ENCODE measurements at regions of chr2 and their contacts with region 1.

Region 1: DNA sequence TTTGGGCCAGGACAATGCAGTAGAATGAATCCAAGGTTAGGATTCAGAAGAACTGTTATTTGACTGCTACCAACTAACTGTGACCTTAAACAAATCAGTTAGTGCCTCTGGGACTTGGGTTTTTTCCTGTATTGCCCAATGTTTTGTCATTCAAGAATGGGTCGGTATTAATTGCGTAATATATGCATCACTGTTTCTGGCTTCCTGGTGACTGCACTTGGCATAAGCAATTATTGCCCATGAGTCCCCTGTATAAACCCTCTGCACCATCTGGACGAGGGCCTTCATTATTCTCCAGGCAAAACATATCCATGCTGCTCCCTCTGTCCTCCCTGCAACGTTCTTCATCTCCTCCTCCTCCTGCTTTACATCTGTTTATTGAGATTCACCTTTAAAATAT is 255.8 kb upstream of the LRRTM1 start:
- DNase-seq: no peak
- ATAC-seq: no peak
- H3K4me3 ChIP-seq: no peak overlapping the region
- H3K4me3 Mint-ChIP-seq: no peak overlapping the region
- H3K27ac ChIP-seq: no peak overlapping the region
- H3K27ac Mint-ChIP-seq: no peak overlapping the region
- H3K4me1 ChIP-seq: no peaks in the 10 kb centered on the region
- H3K4me1 Mint-ChIP-seq: no peaks in the 10 kb centered on the region
- H3K27me3 ChIP-seq: no peaks in the 10 kb centered on the region
- H3K27me3 Mint-ChIP-seq: no peaks in the 10 kb centered on the region

Region 2: DNA sequence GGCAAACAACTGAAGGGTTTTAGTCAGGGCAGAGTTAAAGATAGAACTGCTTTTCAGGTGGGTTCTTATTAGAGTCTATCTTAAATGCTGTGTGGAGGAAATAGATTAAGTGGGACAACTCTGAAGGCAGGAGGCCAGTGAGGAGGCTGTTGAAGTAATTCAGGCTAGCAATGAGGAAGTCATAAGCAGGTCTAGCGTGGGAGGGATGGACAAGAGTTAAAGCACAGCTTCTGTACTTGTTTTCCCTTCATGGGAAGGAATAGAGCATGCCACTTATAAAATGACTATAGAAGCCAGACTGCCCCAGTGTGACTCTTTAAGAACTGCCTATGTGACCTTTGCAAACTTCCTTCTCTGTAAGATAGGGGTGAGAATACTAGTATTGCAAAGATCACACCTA is 53.8 kb before region 1 on chr2:
- CTCF ChIA-PET with region 1: no interaction called
- POLR2A ChIA-PET with region 1: no interaction called
- DNase-seq: no peak
- ATAC-seq: no peak
- H3K4me3 ChIP-seq: no peak overlapping the region
- H3K4me3 Mint-ChIP-seq: no peak overlapping the region
- H3K27ac ChIP-seq: no peak overlapping the region
- H3K27ac Mint-ChIP-seq: no peak overlapping the region
- H3K4me1 ChIP-seq: no peaks in the 10 kb centered on the region
- H3K4me1 Mint-ChIP-seq: no peaks in the 10 kb centered on the region
- H3K27me3 ChIP-seq: no peaks in the 10 kb centered on the region
- H3K27me3 Mint-ChIP-seq: no peaks in the 10 kb centered on the region

Region 3: DNA sequence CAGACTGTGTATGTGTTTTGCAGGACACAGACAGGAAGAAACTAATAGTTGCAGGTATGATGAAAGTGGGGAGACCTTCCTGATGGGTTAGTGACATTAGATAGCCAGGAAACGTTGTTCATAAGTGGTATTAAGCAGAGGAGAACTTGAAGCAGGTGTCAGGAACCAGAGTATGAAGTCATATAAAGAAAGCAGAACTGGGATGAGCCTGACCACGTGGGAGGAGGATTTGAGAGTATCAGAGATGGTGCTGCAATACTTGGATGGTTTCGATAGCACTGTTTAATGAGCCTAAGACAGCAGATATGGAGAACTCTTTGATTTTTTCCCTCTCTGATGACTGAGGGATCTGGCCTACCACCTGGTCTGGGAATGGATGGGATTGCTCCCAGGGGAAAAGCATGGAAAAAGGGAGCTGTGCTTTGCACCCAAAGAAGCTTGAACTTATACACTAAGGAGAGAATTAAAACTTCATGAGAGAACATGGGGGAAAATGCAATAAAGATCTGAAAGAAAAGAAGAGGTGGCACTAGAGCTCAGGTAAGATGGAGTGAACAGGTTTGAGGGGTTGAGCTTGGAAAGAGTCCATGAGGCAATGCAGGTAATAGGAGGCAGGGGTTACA is 29.8 kb before region 1 on chr2:
- CTCF ChIA-PET with region 1: no interaction called
- POLR2A ChIA-PET with region 1: interaction called in 1 of 2 experiments, 10 read pairs
- DNase-seq: no peak
- ATAC-seq: no peak
- H3K4me3 ChIP-seq: no peak overlapping the region
- H3K4me3 Mint-ChIP-seq: no peak overlapping the region
- H3K27ac ChIP-seq: no peak overlapping the region
- H3K27ac Mint-ChIP-seq: no peak overlapping the region
- H3K4me1 ChIP-seq: no peaks in the 10 kb centered on the region
- H3K4me1 Mint-ChIP-seq: no peaks in the 10 kb centered on the region
- H3K27me3 ChIP-seq: no peaks in the 10 kb centered on the region
- H3K27me3 Mint-ChIP-seq: no peaks in the 10 kb centered on the region

Measured in T-cell (primary cell).